Left lung (tissue), 14 donors: ENCODE measurements at regions of chr10 and their contacts with region 1.

Region 1: DNA sequence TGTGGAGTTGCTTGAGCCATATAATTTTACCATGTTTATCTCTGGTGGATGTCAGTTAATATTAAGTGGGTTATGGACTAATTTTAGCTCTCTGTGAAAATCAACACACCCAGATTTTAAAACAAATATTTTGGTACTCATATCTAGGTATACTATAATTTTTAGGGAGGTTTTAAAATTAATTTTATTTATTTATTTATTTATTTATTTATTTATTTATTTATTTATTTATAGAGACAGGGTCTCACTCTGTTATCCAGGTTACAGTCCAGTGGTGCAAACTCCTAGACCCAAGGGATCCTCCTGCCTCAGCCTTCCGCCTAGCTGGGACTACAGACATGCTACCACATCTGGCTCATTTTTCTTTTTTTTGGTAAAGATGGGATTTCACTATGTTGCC is 7.3 kb upstream of the CREM start:
- DNase-seq: no peak
- ATAC-seq: no peak
- H3K4me3 ChIP-seq: no peak overlapping the region
- H3K27ac ChIP-seq: no peak overlapping the region
- H3K4me1 ChIP-seq: no peaks in the 10 kb centered on the region
- H3K27me3 ChIP-seq: no peaks in the 10 kb centered on the region
- CTCF ChIP-seq: no peak

Region 2: DNA sequence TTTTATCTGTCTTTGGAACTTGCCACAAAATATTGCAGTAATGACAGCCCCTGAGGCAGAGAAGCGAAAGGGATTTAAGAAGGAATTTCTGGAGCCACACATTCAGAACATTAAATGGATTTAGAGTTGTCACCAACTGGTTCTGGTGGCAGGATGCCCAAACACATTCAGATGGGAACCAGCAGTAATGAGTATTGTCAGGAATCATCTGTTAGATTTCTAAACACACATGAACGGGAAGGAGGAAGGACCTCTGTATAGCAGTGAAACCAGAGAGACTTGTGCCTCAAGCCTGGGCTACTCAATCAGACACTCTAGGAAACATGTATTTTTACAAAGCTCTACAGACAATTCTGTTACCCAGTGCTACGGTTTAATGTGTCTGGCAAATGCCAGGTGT is 113.1 kb after region 1 on chr10:
- intact Hi-C with region 1: loop called in 1 of 2 experiments (anchors 5 kb)
- DNase-seq: no peak
- ATAC-seq: no peak
- H3K4me3 ChIP-seq: no peak overlapping the region
- H3K27ac ChIP-seq: no peak overlapping the region
- H3K4me1 ChIP-seq: no peaks in the 10 kb centered on the region
- H3K27me3 ChIP-seq: no peaks in the 10 kb centered on the region
- CTCF ChIP-seq: no peak